Endothelial cell of umbilical vein (primary cell): ENCODE measurements at regions of chr4 and their contacts with region 1.

Region 1: DNA sequence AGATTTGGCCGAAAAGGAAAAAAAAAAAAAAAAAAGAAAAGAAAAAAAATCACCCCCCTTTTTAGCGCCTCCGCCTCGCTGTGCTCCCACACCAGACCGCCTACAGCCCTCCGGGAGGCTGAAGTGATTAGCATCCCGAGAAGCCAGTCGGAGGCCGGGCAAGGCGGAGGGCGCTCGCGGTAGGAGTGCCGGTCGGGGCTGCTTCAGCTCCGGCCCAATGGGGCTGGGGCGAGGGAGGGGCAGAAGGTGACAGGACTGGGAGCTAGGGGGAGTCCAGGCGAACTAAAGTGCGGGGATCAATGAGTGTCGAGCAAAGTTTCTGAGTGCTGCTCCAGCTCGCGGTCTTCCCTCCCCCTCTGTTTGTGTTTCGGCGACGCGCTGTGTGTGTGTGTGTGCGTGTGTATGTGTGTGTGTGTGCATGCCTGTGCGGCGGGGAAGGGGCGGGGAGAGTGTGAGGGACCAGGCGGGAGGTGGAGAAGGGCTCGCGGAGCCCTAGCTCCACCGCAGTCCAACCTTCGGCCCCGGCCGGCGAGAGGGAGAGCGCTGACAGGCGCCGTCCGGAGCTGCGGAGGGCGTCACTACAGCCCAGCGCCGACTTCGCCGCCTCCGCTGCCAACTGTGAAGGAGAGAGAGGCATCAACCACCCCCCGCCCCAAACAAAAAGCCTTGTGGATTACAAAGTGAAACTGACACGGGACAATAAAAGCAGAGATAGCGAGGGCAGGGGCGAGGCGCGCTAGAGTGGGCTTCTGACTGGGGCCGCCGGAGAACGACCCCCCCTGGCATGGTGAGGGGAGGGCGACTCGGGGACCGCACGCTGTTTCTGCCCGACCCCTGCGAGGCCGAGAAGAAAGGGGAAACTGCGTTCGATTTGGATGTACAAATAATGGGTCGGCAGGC is at the start of gene FAT4:
- DNase-seq: peak; percentile 99
- H3K4me3 ChIP-seq: peak within 1 kb of the TSS; percentile 58 to 90 (median 82)
- H3K27ac ChIP-seq: peak within 1 kb of the TSS; percentile 82
- H3K4me1 ChIP-seq: peaks cover 29% of the 10 kb centered on the region
- H3K27me3 ChIP-seq: no peaks in the 10 kb centered on the region
- CTCF ChIP-seq: no peak
- POLR2A ChIP-seq: peak; percentile 79
- total RNA-seq, gene FAT4: 33.2 and 39.1 TPM in 2 replicates

Region 2: GRCh38 chr4:125368671-125369081 is 53.8 kb after region 1 on chr4:
- CTCF ChIA-PET with region 1: interaction called, 3 read pairs
- POLR2A ChIA-PET with region 1: no interaction called
- dilution Hi-C with region 1: no loop called
- intact Hi-C with region 1: loop called (anchors 1 kb)
- DNase-seq: peak; percentile 84
- H3K4me3 ChIP-seq: peak overlapping the region; percentile 21 to 73 (median 32)
- H3K27ac ChIP-seq: peak overlapping the region; percentile 74
- H3K4me1 ChIP-seq: peaks cover 19% of the 10 kb centered on the region
- H3K27me3 ChIP-seq: no peaks in the 10 kb centered on the region
- CTCF ChIP-seq: no peak
- POLR2A ChIP-seq: no peak

Region 3: GRCh38 chr4:125520258-125520990 is 205.5 kb after region 1 on chr4:
- CTCF ChIA-PET with region 1: interaction called, 3 read pairs
- POLR2A ChIA-PET with region 1: no interaction called
- dilution Hi-C with region 1: no loop called
- intact Hi-C with region 1: loop called (anchors 1 kb)
- DNase-seq: peak; percentile 91
- H3K4me3 ChIP-seq: no peak overlapping the region
- H3K27ac ChIP-seq: peak overlapping the region; percentile 34
- H3K4me1 ChIP-seq: peaks cover 25% of the 10 kb centered on the region
- H3K27me3 ChIP-seq: no peaks in the 10 kb centered on the region
- CTCF ChIP-seq: no peak
- POLR2A ChIP-seq: peak; percentile 73

Region 4: GRCh38 chr4:125750828-125751466 is 436.0 kb after region 1 on chr4:
- CTCF ChIA-PET with region 1: interaction called, 215 read pairs
- POLR2A ChIA-PET with region 1: no interaction called
- dilution Hi-C with region 1: no loop called
- intact Hi-C with region 1: loop called (anchors 1 kb)
- DNase-seq: peak; percentile 80
- H3K4me3 ChIP-seq: no peak overlapping the region
- H3K27ac ChIP-seq: no peak overlapping the region
- H3K4me1 ChIP-seq: no peaks in the 10 kb centered on the region
- H3K27me3 ChIP-seq: no peaks in the 10 kb centered on the region
- CTCF ChIP-seq: peak; percentile 43 to 65
- POLR2A ChIP-seq: no peak

Region 5: GRCh38 chr4:126405369-126405982 is 1090.5 kb after region 1 on chr4:
- CTCF ChIA-PET with region 1: interaction called, 11 read pairs
- POLR2A ChIA-PET with region 1: no interaction called
- dilution Hi-C with region 1: no loop called
- intact Hi-C with region 1: no loop called
- DNase-seq: peak; percentile 26
- H3K4me3 ChIP-seq: no peak overlapping the region
- H3K27ac ChIP-seq: no peak overlapping the region
- H3K4me1 ChIP-seq: no peaks in the 10 kb centered on the region
- H3K27me3 ChIP-seq: no peaks in the 10 kb centered on the region
- CTCF ChIP-seq: peak; percentile 32 to 60
- POLR2A ChIP-seq: no peak

Region 6: GRCh38 chr4:126778348-126778747 is 1463.4 kb after region 1 on chr4:
- CTCF ChIA-PET with region 1: no interaction called
- POLR2A ChIA-PET with region 1: no interaction called
- dilution Hi-C with region 1: no loop called
- intact Hi-C with region 1: loop called (anchors 5 kb)
- DNase-seq: peak; percentile 71
- H3K4me3 ChIP-seq: no peak overlapping the region
- H3K27ac ChIP-seq: peak overlapping the region; percentile 66
- H3K4me1 ChIP-seq: peaks cover 18% of the 10 kb centered on the region
- H3K27me3 ChIP-seq: no peaks in the 10 kb centered on the region
- CTCF ChIP-seq: no peak
- POLR2A ChIP-seq: no peak